ENCODE measurements at regions of chr22 and their contacts with region 1.

Region 1: GRCh38 chr22:24133187-24133965 is 47.9 kb upstream of the SUSD2 start:
- DNase-seq: peak in 8 of 9 experiments; percentile 32 to 78 (median 62)
- ATAC-seq: peak; percentile 57
- H3K4me3 ChIP-seq: no peak overlapping the region
- H3K4me3 Mint-ChIP-seq: no peak overlapping the region
- H3K27ac ChIP-seq: peak overlapping the region; percentile 25 to 69
- H3K27ac Mint-ChIP-seq: peak overlapping the region; percentile 90
- H3K4me1 ChIP-seq: peaks cover 40% of the 10 kb centered on the region
- H3K4me1 Mint-ChIP-seq: peaks cover 38% of the 10 kb centered on the region
- H3K27me3 ChIP-seq: no peaks in the 10 kb centered on the region
- H3K27me3 Mint-ChIP-seq: no peaks in the 10 kb centered on the region
- CTCF ChIP-seq: peak; percentile 53

Region 2: DNA sequence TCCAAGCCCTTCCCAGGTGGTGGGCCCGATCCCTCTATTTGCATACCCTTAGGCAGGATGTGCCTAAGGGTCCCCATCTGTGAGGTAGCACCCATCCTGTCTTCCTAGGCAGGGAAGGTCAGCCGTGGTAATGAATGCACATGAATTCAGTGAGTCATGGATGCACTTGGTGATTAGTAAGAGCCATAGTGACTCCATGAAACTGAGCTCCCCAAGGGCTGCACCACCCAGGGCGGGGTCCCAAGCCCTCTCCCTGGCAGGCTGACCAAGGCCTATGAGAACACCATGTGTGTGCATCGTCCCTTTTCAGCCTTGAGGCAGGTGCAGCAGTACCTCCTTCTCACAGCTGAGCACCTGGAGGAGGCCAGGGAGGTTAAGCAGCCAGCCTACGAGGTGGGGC is 32.3 kb after region 1 on chr22:
- CTCF ChIA-PET with region 1: interaction called, 273 read pairs
- POLR2A ChIA-PET with region 1: interaction called, 189 read pairs
- intact Hi-C with region 1: no loop called
- DNase-seq: no peak
- ATAC-seq: no peak
- H3K4me3 ChIP-seq: no peak overlapping the region
- H3K4me3 Mint-ChIP-seq: no peak overlapping the region
- H3K27ac ChIP-seq: no peak overlapping the region
- H3K27ac Mint-ChIP-seq: peak overlapping the region; percentile 22
- H3K4me1 ChIP-seq: peaks cover 43% of the 10 kb centered on the region
- H3K4me1 Mint-ChIP-seq: peaks cover 59% of the 10 kb centered on the region
- H3K27me3 ChIP-seq: no peaks in the 10 kb centered on the region
- H3K27me3 Mint-ChIP-seq: no peaks in the 10 kb centered on the region
- CTCF ChIP-seq: no peak

Region 3: DNA sequence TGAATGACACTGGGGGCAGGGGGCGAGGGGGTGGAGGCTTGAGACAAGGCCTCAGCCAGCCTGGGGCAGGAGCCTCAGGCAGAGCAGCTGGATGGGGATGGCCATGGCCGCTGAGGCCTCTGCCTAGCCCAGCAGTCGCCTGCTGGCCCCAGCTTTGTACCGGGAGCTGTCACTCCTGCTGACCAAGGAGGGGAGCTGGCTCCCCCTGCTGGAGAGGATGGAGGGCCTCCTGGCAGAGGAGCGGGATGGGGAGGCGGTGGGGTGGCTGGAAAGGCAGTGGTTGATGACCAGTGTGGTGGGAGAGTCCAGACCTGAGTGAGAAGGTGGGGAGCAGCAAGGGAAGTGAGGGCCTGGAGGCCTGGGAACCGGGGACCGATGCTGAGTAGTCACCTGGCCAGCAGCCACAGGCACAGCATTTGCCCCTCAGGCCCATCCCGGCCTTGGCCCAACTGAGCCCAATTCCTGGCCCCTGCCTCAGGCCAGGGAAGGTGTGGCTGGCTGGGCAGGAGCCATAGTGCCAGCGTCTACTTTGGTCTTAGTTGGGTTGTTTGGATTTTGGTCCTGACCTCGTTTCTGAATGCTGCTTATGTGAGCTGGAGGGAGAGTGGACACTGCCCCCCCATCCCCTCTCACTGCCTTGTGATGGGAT is 41.9 kb after region 1 on chr22:
- CTCF ChIA-PET with region 1: interaction called, 242 read pairs
- POLR2A ChIA-PET with region 1: interaction called, 8 read pairs
- intact Hi-C with region 1: loop called (anchors 1 kb)
- DNase-seq: peak; percentile 39 to 83 (median 69)
- ATAC-seq: peak; percentile 67
- H3K4me3 ChIP-seq: no peak overlapping the region
- H3K4me3 Mint-ChIP-seq: no peak overlapping the region
- H3K27ac ChIP-seq: peak overlapping the region; percentile 27 to 32
- H3K27ac Mint-ChIP-seq: peak overlapping the region; percentile 41
- H3K4me1 ChIP-seq: peaks cover 2% of the 10 kb centered on the region
- H3K4me1 Mint-ChIP-seq: peaks cover 9% of the 10 kb centered on the region
- H3K27me3 ChIP-seq: no peaks in the 10 kb centered on the region
- H3K27me3 Mint-ChIP-seq: no peaks in the 10 kb centered on the region
- CTCF ChIP-seq: peak; percentile 68

Region 4: DNA sequence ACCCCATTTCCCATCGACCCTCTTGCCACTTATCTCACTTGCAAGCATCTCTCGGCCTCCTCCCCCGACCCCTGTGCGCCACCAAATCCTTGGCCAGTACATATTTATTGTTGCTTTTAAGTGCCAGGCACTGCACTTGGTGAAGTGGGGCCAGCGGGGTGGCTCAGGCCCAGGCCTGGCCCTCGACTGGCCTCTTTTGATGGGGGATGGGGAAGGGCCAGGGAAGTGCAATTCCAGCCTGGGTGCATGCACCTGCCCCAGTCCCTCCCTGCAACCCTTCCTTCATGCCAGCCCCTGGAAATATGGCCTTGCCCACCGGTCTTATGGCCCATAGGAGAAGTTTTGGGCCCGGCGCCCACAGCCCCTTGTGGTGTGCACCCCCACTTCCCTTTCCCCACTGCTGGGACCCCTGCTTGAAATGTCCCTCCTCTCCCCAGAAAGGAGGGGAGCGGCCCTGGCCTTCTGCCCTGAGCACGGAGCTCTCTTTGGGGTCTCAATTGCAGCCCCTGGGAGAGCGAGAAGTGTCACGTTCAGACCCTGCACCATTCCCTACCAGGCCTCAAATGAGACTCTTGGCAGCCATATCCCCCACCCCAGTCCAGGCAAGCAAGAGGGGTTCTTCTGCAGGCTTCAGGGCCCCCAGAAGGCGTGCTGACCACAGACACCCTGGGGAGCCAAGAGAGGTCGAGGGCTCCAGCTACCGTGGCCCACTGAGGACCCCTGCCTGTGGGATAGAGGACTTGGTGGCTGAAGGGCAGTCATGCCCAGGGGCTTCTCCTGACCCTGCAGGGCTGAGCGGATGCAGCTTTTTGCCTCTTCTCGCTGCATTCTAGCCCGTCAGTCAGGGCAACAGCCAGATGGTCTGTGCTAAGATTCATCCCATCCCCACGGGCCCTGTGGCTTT is 48.9 kb after region 1 on chr22:
- CTCF ChIA-PET with region 1: interaction called, 242 read pairs
- POLR2A ChIA-PET with region 1: interaction called, 7 read pairs
- intact Hi-C with region 1: loop called in 1 of 2 experiments (anchors 1 kb)
- DNase-seq: peak in 3 of 9 experiments; percentile 19 to 32 (median 25)
- ATAC-seq: no peak
- H3K4me3 ChIP-seq: no peak overlapping the region
- H3K4me3 Mint-ChIP-seq: no peak overlapping the region
- H3K27ac ChIP-seq: no peak overlapping the region
- H3K27ac Mint-ChIP-seq: no peak overlapping the region
- H3K4me1 ChIP-seq: no peaks in the 10 kb centered on the region
- H3K4me1 Mint-ChIP-seq: peaks cover 2% of the 10 kb centered on the region
- H3K27me3 ChIP-seq: no peaks in the 10 kb centered on the region
- H3K27me3 Mint-ChIP-seq: no peaks in the 10 kb centered on the region
- CTCF ChIP-seq: no peak

Region 5: GRCh38 chr22:24230911-24231656 is 97.7 kb after region 1 on chr22:
- CTCF ChIA-PET with region 1: interaction called, 12 read pairs
- POLR2A ChIA-PET with region 1: no interaction called
- intact Hi-C with region 1: loop called in 1 of 2 experiments (anchors 1 kb)
- DNase-seq: peak; percentile 36 to 79 (median 63)
- ATAC-seq: peak; percentile 79
- H3K4me3 ChIP-seq: no peak overlapping the region
- H3K4me3 Mint-ChIP-seq: no peak overlapping the region
- H3K27ac ChIP-seq: no peak overlapping the region
- H3K27ac Mint-ChIP-seq: no peak overlapping the region
- H3K4me1 ChIP-seq: no peaks in the 10 kb centered on the region
- H3K4me1 Mint-ChIP-seq: peaks cover 2% of the 10 kb centered on the region
- H3K27me3 ChIP-seq: no peaks in the 10 kb centered on the region
- H3K27me3 Mint-ChIP-seq: no peaks in the 10 kb centered on the region
- CTCF ChIP-seq: peak; percentile 61

Region 6: GRCh38 chr22:24247011-24247507 is 113.7 kb after region 1 on chr22:
- CTCF ChIA-PET with region 1: interaction called, 7 read pairs
- POLR2A ChIA-PET with region 1: no interaction called
- intact Hi-C with region 1: loop called (anchors 1 to 5 kb)
- DNase-seq: no peak
- ATAC-seq: no peak
- H3K4me3 ChIP-seq: no peak overlapping the region
- H3K4me3 Mint-ChIP-seq: no peak overlapping the region
- H3K27ac ChIP-seq: no peak overlapping the region
- H3K27ac Mint-ChIP-seq: no peak overlapping the region
- H3K4me1 ChIP-seq: peaks cover 25% of the 10 kb centered on the region
- H3K4me1 Mint-ChIP-seq: peaks cover 24% of the 10 kb centered on the region
- H3K27me3 ChIP-seq: no peaks in the 10 kb centered on the region
- H3K27me3 Mint-ChIP-seq: no peaks in the 10 kb centered on the region
- CTCF ChIP-seq: no peak

Region 7: DNA sequence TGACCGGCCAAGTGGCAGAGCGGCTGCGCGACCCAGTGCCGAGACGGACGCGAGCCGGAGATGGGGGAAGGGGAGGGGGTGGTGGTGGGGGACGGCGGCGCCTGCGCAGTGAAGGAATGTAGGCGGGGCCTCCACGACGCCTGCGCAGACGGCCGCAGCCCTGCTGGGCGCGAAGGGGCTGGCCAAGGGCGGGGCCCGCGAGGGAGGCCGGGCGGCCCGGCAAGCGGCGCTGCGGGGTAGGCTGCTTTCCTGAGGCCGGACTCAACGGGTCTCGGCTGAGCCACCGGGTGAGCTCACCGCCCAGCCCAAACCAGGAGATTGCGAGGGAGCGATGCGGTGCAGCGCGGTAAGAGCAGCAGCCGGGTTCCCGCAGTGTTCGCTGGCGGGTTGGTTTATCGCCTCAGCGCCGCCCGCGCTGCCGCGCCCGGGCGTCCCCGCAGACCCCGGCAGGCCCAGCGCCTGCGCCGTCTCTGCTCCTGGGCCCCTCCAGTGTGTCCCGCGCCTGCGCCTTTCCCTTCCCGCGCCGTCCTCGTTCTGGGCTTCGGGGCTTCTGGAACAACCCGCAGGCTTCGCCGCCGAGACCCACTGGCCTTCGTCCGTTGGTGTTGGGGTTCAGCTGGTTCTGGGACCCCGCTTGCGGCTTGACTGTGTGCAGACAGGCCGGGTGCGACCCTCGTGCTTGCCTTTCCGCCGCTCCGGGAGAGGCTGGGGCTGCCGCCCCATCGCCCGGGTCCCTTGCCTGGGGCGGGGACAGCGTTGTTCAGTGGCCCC is 137.4 kb after region 1 on chr22 and contains the start of gene SPECC1L:
- CTCF ChIA-PET with region 1: interaction called, 3 read pairs
- POLR2A ChIA-PET with region 1: no interaction called
- intact Hi-C with region 1: loop called in 1 of 2 experiments (anchors 5 kb)
- DNase-seq: peak; percentile 81 to 97 (median 90)
- ATAC-seq: peak; percentile 91
- H3K4me3 ChIP-seq: peak within 1 kb of the TSS; percentile 91 to 95
- H3K4me3 Mint-ChIP-seq: peak within 1 kb of the TSS; percentile 88
- H3K27ac ChIP-seq: peak within 1 kb of the TSS; percentile 75 to 77
- H3K27ac Mint-ChIP-seq: peak within 1 kb of the TSS; percentile 87
- H3K4me1 ChIP-seq: peaks cover 19% of the 10 kb centered on the region
- H3K4me1 Mint-ChIP-seq: peaks cover 36% of the 10 kb centered on the region
- H3K27me3 ChIP-seq: no peaks in the 10 kb centered on the region
- H3K27me3 Mint-ChIP-seq: no peaks in the 10 kb centered on the region
- CTCF ChIP-seq: no peak
- total RNA-seq, gene SPECC1L: 24.7 to 28.6 TPM

Region 8: GRCh38 chr22:24576778-24577177 is 443.4 kb after region 1 on chr22:
- CTCF ChIA-PET with region 1: no interaction called
- POLR2A ChIA-PET with region 1: no interaction called
- intact Hi-C with region 1: no loop called
- DNase-seq: no peak
- ATAC-seq: no peak
- H3K4me3 ChIP-seq: no peak overlapping the region
- H3K4me3 Mint-ChIP-seq: no peak overlapping the region
- H3K27ac ChIP-seq: no peak overlapping the region
- H3K27ac Mint-ChIP-seq: peak overlapping the region; percentile 1
- H3K4me1 ChIP-seq: no peaks in the 10 kb centered on the region
- H3K4me1 Mint-ChIP-seq: no peaks in the 10 kb centered on the region
- H3K27me3 ChIP-seq: no peaks in the 10 kb centered on the region
- H3K27me3 Mint-ChIP-seq: no peaks in the 10 kb centered on the region
- CTCF ChIP-seq: no peak